ENCODE measurements at regions of chr10 and their contacts with region 1.

Region 1: GRCh38 chr10:43292755-43293676 is 26.2 kb upstream of the RASGEF1A start:
- DNase-seq: peak; percentile 35 to 65 (median 57)
- H3K4me3 ChIP-seq: no peak overlapping the region
- H3K4me3 Mint-ChIP-seq: peak overlapping the region in 1 of 2 donors; percentile 65
- H3K27ac ChIP-seq: no peak overlapping the region
- H3K27ac Mint-ChIP-seq: no peak overlapping the region
- H3K4me1 ChIP-seq: peaks cover 2 to 11% of the 10 kb centered on the region in 2 donors
- H3K4me1 Mint-ChIP-seq: peaks cover 15% of the 10 kb centered on the region
- H3K27me3 ChIP-seq: no peaks in the 10 kb centered on the region
- H3K27me3 Mint-ChIP-seq: peaks cover 3 to 15% (median 15%) of the 10 kb centered on the region in 3 donors
- CTCF ChIP-seq: peak; percentile 72

Region 2: GRCh38 chr10:43348511-43349312 is 55.7 kb after region 1 on chr10:
- intact Hi-C with region 1: loop called (anchors 2 kb)
- DNase-seq: peak; percentile 86 to 90 (median 87)
- H3K4me3 ChIP-seq: no peak overlapping the region
- H3K4me3 Mint-ChIP-seq: no peak overlapping the region
- H3K27ac ChIP-seq: no peak overlapping the region
- H3K27ac Mint-ChIP-seq: no peak overlapping the region
- H3K4me1 ChIP-seq: peaks cover 10 to 13% of the 10 kb centered on the region in 2 donors
- H3K4me1 Mint-ChIP-seq: peaks cover 15% of the 10 kb centered on the region
- H3K27me3 ChIP-seq: peaks cover 3 to 23% of the 10 kb centered on the region in 2 donors
- H3K27me3 Mint-ChIP-seq: peaks cover 24 to 36% (median 24%) of the 10 kb centered on the region in 3 donors
- CTCF ChIP-seq: peak; percentile 90

Region 3: GRCh38 chr10:43461950-43462349 is 168.9 kb after region 1 on chr10:
- intact Hi-C with region 1: loop called in 1 of 2 experiments (anchors 5 kb)
- DNase-seq: peak; percentile 66 to 84 (median 73)
- H3K4me3 ChIP-seq: no peak overlapping the region
- H3K4me3 Mint-ChIP-seq: peak overlapping the region in 1 of 2 donors; percentile 42
- H3K27ac ChIP-seq: no peak overlapping the region
- H3K27ac Mint-ChIP-seq: peak overlapping the region in 3 of 7 donors; percentile 50 to 68 (median 65)
- H3K4me1 ChIP-seq: no peaks in the 10 kb centered on the region
- H3K4me1 Mint-ChIP-seq: peaks cover 5% of the 10 kb centered on the region
- H3K27me3 ChIP-seq: no peaks in the 10 kb centered on the region
- H3K27me3 Mint-ChIP-seq: peaks cover 0 to 4% (median 1%) of the 10 kb centered on the region in 3 donors
- CTCF ChIP-seq: peak; percentile 77

Measured in CD14-positive monocyte (primary cell).